ENCODE measurements at regions of chr7 and their contacts with region 1.

Region 1: DNA sequence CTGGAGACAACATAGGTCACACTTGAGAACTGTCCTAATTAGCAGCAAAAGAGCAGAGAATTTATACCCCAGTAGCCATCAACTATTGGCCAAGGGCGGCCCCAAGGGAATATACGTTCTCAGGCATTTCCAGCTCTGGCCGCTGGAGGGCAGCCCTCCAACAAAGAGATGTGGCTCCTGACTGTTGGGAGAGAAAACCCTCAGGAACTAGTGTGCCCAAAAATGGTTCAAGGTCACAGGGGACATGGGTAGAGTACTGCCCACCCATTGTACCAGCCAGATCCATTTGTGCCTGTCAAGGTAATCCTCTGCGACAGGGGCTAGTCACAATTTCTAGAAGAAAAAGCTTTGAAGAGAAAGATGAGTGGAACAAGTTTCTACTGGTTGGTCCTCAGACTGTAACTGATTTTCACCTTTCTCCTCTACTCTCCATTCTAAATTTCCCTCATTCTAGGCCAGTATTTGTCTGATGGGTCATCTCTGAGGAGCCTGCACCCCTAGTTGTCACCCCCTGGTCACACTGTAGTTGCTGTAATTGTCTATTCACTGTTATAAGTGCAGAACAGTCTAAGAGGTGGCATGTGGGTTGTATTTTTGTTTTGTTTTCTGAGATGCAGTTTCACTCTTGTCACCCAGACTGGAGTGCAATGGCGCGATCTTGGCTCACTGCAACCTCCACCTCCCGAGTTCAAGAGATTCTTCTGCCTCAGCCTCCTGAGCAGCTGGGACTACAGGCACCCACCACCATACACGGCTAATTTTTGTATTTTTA is 14.7 kb upstream of the C7orf33 start:
- DNase-seq: no peak
- H3K4me3 ChIP-seq: no peak overlapping the region
- H3K27me3 ChIP-seq: no peaks in the 10 kb centered on the region
- CTCF ChIP-seq: peak; percentile 90

Region 2: DNA sequence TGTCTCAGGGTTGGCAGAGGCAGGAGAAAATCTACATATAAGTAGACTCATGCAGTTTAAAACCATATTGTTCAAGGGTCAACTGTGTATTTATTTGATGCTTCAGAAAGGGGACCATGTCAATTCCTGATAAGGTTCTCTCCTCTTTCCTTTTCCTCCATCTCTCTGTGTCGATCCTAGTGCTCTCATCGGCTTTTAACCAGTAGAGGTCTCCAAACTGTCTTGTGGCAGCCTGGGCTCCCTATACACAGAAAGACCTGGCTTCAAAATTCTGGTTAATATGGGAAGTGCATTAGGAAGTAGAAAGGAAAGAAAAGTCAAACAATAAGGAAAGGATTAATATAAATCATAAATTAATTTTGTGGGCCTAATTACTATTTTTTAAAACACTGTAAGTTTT is 289.7 kb before region 1 on chr7:
- CTCF ChIA-PET with region 1: no interaction called
- POLR2A ChIA-PET with region 1: no interaction called
- DNase-seq: no peak
- H3K4me3 ChIP-seq: no peak overlapping the region
- H3K27me3 ChIP-seq: no peaks in the 10 kb centered on the region
- CTCF ChIP-seq: no peak

Region 3: DNA sequence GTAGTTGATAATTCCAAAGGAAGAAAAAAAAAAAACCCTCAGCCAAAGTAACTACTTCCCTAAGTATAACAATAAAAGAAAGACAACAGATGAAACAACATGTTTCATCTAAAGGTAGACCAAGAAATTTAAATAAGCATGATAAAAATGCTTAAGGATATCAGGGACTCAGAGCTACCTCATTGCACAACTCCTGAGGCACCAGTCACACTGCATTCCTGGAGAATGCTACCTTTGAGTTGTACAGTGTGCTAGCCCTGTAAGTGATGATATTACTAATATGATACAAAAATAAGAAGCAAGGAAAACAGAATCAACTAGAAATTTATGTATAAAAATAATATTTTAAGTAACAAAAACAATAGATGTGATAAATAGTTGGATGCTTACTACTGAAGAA is 14.7 kb before region 1 on chr7:
- CTCF ChIA-PET with region 1: interaction called, 10 read pairs
- POLR2A ChIA-PET with region 1: no interaction called
- DNase-seq: no peak
- H3K4me3 ChIP-seq: no peak overlapping the region
- H3K27me3 ChIP-seq: no peaks in the 10 kb centered on the region
- CTCF ChIP-seq: no peak

Measured in BJ (cell line).